Mammary epithelial cell (primary cell): ENCODE measurements at regions of chr20 and their contacts with region 1.

Region 1: DNA sequence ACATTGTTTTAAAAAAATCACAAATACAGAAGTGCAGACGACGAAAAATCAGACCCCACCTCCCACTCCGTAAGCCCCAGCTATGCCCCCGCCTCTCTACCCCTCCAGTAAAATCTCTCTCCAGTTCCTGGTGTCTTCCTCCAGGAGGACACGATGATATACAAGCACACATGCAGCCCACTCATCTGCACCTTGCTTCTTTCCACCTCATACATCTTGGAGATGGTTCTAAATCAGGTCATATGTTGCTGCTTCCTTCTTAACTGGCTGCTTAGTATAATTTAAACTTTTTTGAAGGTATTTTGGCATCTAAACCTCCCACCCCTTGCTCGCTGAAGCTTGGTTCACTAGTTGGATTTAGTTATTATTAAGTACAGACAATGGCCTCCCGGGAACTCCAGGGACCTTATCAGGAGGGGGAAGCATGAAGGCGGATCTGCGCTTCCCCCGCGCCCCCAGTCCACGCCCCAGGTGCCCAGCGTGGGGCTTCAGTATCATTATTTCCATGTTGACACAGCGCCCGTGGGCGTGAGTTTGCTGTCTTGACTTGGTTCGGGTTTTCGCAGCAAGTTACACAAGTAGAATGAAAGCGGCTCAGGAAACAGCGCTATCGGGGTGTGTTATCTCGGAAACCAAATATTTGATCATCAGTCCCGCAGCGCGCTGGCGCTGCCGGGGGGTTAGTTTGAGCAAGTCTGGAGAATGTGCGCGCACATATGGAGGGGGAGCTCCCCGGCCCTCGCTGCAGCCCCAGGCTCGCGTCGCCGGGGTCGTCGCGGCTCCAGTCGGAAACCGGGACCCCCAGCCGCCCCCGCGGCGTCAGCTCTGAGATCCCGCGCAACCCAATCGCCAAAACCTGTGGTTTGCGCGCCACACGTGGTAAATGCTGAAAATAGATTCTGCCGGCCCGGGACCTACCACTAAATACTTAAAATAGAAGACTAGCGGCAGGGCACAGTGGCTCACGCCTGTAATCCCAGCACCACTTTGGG is 2.3 kb downstream of the BMP7 start:
- DNase-seq: no peak
- H3K4me3 ChIP-seq: no peak overlapping the region
- H3K27ac ChIP-seq: no peak overlapping the region
- H3K4me1 ChIP-seq: peaks cover 5% of the 10 kb centered on the region
- H3K27me3 ChIP-seq: peaks cover 38% of the 10 kb centered on the region
- CTCF ChIP-seq: no peak

Region 2: GRCh38 chr20:57061058-57061900 is 202.8 kb before region 1 on chr20:
- CTCF ChIA-PET with region 1: no interaction called
- dilution Hi-C with region 1: no loop called
- in situ Hi-C with region 1: no loop called
- intact Hi-C with region 1: no loop called
- DNase-seq: peak; percentile 21
- H3K4me3 ChIP-seq: no peak overlapping the region
- H3K27ac ChIP-seq: peak overlapping the region; percentile 49
- H3K4me1 ChIP-seq: peaks cover 14% of the 10 kb centered on the region
- H3K27me3 ChIP-seq: no peaks in the 10 kb centered on the region
- CTCF ChIP-seq: peak; percentile 17 to 47

Region 3: DNA sequence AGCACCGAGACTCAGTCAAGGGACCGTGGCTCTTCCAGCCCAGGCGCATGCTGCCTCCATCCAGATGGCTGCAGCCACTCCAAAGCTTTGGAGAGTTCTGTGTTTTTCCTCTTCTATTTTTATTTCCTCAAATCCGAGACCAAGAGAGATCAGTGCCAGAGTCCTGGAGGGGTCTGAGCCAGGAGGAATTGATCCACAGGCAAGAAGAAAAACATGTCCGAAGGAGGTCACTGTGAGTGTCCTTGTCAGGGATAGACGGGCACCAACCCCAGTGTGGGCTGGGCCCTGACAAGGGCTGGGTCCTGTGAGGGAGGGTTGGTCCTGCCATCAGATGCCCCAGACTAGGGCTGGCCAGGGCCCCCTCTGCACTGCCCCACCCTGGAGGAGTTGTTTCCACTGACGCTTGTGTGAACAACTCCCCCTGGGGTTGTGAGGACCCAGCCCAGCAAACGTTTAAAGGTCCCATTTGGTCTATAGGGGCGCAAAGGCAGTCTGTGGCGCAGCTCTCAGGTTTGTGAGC is 101.9 kb before region 1 on chr20:
- CTCF ChIA-PET with region 1: no interaction called
- dilution Hi-C with region 1: loop called (anchors 5 kb)
- in situ Hi-C with region 1: no loop called
- intact Hi-C with region 1: no loop called
- DNase-seq: no peak
- H3K4me3 ChIP-seq: no peak overlapping the region
- H3K27ac ChIP-seq: no peak overlapping the region
- H3K4me1 ChIP-seq: no peaks in the 10 kb centered on the region
- H3K27me3 ChIP-seq: no peaks in the 10 kb centered on the region
- CTCF ChIP-seq: no peak

Region 4: GRCh38 chr20:57323034-57323433 is 58.9 kb after region 1 on chr20:
- CTCF ChIA-PET with region 1: no interaction called
- dilution Hi-C with region 1: no loop called
- in situ Hi-C with region 1: no loop called
- intact Hi-C with region 1: no loop called
- DNase-seq: peak; percentile 70
- H3K4me3 ChIP-seq: no peak overlapping the region
- H3K27ac ChIP-seq: no peak overlapping the region
- H3K4me1 ChIP-seq: peaks cover 20% of the 10 kb centered on the region
- H3K27me3 ChIP-seq: peaks cover 2% of the 10 kb centered on the region
- CTCF ChIP-seq: no peak